Body of pancreas (tissue), 4 donors: ENCODE measurements at regions of chr10 and their contacts with region 1.

Region 1: GRCh38 chr10:88983206-88983605 is 7.4 kb upstream of the FAS start:
- DNase-seq: no peak
- ATAC-seq: no peak
- H3K4me3 ChIP-seq: no peak overlapping the region
- H3K27ac ChIP-seq: no peak overlapping the region
- H3K4me1 ChIP-seq: peaks cover 15% of the 10 kb centered on the region
- H3K27me3 ChIP-seq: no peaks in the 10 kb centered on the region
- CTCF ChIP-seq: no peak
- POLR2A ChIP-seq: no peak

Region 2: DNA sequence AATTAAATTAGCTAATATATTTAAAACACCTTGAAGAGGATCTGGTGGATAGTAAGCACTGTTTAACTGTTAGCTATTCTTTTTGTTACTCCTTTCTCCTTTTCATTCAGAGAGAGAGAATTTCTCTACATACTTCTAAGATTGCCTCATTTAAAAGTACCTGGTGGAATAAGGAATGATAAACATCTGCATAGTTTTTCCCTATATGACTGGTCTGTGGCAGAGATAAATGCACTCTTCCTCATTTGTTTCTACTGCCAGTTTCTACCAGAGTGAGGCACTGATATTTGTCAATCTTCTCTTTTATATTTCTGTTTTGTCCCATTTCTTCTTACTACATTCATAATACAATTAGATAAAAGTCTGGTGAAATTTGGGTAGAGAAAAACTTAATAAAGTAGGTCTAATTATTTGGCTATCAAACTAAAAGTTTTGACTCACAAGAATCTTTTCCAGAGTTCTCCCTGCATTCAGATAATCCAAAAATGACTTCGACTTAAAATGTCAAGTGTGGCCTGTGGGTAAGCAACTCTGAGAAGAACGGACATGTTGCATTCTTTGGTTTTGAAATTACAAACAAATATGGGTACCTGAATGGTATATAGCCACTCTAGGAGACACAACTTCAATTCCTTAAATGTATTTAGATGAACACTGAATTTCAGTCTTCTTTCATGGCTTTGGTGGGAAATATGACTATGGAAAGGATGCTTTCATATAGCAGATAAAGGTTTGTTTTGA is 438.9 kb before region 1 on chr10:
- intact Hi-C with region 1: no loop called
- DNase-seq: no peak
- ATAC-seq: no peak
- H3K4me3 ChIP-seq: no peak overlapping the region
- H3K27ac ChIP-seq: no peak overlapping the region
- H3K4me1 ChIP-seq: peaks cover 21% of the 10 kb centered on the region
- H3K27me3 ChIP-seq: no peaks in the 10 kb centered on the region
- CTCF ChIP-seq: no peak
- POLR2A ChIP-seq: no peak

Region 3: DNA sequence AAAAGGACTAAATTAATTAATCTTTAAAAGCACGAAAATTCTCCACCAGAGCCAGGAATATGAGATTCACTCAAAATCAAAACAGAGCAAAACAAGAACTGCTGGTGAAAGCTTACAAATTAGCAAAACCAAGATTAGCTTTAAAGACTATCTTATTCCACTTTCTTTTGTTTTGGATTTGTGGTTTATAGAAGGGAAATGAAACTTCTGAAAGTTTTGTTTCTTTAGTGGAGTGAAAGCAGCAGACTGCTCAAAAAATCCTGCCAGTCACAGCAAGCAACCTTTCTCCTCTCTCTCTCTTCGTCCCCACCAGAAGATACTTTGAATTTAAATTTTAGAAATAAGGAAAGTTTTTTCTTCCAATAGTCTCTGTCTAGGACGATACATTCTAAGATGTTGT is 38.4 kb before region 1 on chr10:
- intact Hi-C with region 1: loop called (anchors 5 kb)
- DNase-seq: no peak
- ATAC-seq: no peak
- H3K4me3 ChIP-seq: no peak overlapping the region
- H3K27ac ChIP-seq: no peak overlapping the region
- H3K4me1 ChIP-seq: no peaks in the 10 kb centered on the region
- H3K27me3 ChIP-seq: no peaks in the 10 kb centered on the region
- CTCF ChIP-seq: no peak
- POLR2A ChIP-seq: no peak